ENCODE measurements at regions of chrX and their contacts with region 1.

Region 1: DNA sequence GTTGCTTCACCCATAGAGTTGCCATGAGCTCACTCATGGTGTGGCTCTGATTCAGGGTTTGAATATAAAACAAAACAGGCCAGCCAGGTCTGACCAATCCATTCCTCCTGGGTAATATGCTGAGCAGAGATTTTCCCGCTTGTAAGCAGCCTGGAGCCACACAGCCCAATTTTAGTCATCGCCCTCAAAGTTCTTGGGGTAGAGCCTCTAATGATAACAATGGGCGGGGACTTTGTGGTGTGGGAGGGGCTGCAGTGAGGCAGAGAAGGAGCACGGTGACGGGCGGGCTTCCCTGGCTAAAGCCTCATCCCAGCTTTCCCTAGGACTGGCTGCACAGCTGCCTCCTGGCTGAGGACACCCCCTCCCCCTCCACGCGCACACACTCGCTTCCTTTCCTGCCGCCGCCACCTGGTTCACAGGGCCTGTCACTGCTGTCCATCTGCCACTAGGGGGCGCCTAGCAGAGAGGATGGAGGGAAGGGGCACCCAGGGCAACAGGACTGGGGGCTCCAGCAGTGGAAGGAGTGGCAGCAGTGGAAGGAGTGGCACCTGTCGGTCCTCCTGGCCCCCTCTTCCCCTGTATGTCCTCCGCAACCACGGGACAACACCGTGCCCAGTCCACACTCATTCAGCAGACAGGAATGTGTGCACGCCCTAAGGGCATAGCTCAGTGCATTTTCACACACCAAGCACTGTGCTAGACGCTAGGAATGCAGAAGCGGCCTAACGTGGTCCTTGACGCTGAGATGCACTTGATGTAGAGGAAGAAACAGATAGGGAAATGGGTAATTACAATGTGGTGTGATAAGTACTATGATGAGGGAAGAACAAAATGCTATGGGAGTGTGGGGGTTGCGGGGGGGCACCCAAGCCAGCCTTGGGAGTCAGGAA is 26.8 kb downstream of the PRPS1 start:
- DNase-seq: peak; percentile 57 to 75 (median 64)
- ATAC-seq: peak; percentile 95
- H3K4me3 ChIP-seq: peak overlapping the region; percentile 24; the same call in 1 of the 2 replicates
- H3K27ac ChIP-seq: peak overlapping the region; percentile 38; the same call in 1 of the 3 replicates
- H3K4me1 ChIP-seq: peaks cover 7 to 8% of the 10 kb centered on the region in 2 experiments; a peak in 3 of 5 replicates
- H3K27me3 ChIP-seq: no peaks in the 10 kb centered on the region
- CTCF ChIP-seq: peak; percentile 71 to 85 (median 83)
- EP300 ChIP-seq: no peak
- POLR2A ChIP-seq: no peak
- RAD21 ChIP-seq: peak; percentile 15 to 39; a peak in 2 of 4 replicates

Region 2: DNA sequence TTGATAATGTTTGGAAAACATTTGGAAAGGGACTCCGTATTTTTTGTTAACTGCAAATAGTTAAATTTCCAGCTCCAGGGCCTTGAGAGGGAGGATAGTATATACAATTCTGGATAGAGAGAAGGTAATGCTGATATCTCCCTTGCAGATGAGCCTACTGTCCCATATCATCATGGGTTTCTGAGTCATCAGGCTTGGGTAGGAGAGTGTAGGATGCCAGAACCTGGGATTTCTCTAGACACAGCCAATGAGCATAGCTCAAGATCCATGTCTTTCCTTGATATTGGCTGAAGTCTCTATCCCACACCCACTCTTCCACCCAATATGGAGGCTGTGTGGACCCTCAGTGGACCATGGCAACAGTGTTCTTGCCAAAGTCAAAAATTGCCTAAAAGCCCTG is 197.8 kb before region 1 on chrX:
- CTCF ChIA-PET with region 1: no interaction called
- POLR2A ChIA-PET with region 1: no interaction called
- in situ Hi-C with region 1: no loop called
- intact Hi-C with region 1: no loop called
- DNase-seq: no peak
- ATAC-seq: no peak
- H3K4me3 ChIP-seq: no peak overlapping the region
- H3K27ac ChIP-seq: no peak overlapping the region
- H3K4me1 ChIP-seq: no peaks in the 10 kb centered on the region
- H3K27me3 ChIP-seq: no peaks in the 10 kb centered on the region
- CTCF ChIP-seq: no peak
- EP300 ChIP-seq: no peak
- POLR2A ChIP-seq: no peak
- RAD21 ChIP-seq: no peak

Region 3: DNA sequence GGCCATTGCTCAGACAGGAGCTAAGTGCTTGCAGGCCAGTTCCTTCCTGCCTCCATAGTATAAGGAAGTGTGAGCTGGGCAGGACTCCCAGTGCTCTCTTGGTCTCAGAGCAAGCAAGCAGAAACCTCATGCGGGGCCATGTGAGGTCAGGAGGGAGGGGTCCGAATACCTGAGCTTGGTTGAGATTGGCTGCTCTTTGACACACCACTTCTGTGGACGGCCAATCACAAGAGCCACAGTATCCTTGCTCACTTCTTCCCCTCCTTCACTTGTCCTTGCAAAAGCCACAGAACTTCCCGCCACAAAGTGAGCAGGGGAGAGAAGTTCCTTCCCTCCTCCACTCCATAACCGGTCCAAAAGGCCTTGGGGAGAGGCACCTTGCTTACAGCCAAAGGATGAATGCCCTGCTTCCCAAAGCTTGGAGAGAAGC is 29.9 kb after region 1 on chrX:
- CTCF ChIA-PET with region 1: no interaction called
- POLR2A ChIA-PET with region 1: no interaction called
- in situ Hi-C with region 1: no loop called
- intact Hi-C with region 1: no loop called
- DNase-seq: peak; percentile 69 to 81 (median 77)
- ATAC-seq: peak; percentile 99
- H3K4me3 ChIP-seq: no peak overlapping the region
- H3K27ac ChIP-seq: peak overlapping the region; percentile 48; the same call in 1 of the 3 replicates
- H3K4me1 ChIP-seq: peaks cover 0 to 12% of the 10 kb centered on the region in 2 experiments; a peak in 3 of 5 replicates
- H3K27me3 ChIP-seq: no peaks in the 10 kb centered on the region
- CTCF ChIP-seq: no peak
- EP300 ChIP-seq: peak; percentile 18; the same call in 1 of the 2 replicates
- POLR2A ChIP-seq: peak; percentile 35; the same call in 1 of the 2 replicates
- RAD21 ChIP-seq: no peak

Region 4: DNA sequence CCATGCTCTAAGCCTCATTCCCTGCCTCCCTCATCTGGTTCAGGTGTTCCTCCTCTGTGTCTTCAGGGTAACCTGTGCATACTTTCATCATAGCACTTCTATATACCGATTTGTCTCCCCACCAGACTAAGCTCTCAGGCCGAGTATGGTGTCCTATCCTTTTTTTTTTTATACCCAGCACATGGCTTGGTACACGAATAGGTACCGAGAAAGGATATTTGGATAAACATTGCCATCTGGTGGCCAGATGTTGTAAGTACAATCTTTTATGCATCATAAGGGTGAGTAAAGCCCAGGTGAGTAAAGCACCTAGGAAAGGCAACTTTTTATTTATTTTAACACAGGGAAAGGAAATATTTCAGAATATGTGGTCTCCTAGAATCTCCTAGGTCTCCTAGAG is 238.9 kb after region 1 on chrX:
- CTCF ChIA-PET with region 1: interaction called, 3 read pairs
- POLR2A ChIA-PET with region 1: no interaction called
- in situ Hi-C with region 1: no loop called
- intact Hi-C with region 1: loop called (anchors 10 kb)
- DNase-seq: peak; percentile 36 to 50 (median 44)
- ATAC-seq: peak; percentile 84
- H3K4me3 ChIP-seq: no peak overlapping the region
- H3K27ac ChIP-seq: no peak overlapping the region
- H3K4me1 ChIP-seq: no peaks in the 10 kb centered on the region
- H3K27me3 ChIP-seq: no peaks in the 10 kb centered on the region
- CTCF ChIP-seq: peak; percentile 44 to 50 (median 46); a peak in 4 of 6 replicates
- EP300 ChIP-seq: no peak
- POLR2A ChIP-seq: no peak
- RAD21 ChIP-seq: peak; percentile 65 to 79